Dorsolateral prefrontal cortex (tissue), 120 donors: ENCODE measurements at regions of chr14 and their contacts with region 1.

Region 1: GRCh38 chr14:73458151-73458976 is at the start of gene NUMB:
- DNase-seq: peak; percentile 83 to 99 (median 98)
- H3K4me3 ChIP-seq: peak within 1 kb of the TSS; percentile 59 to 98 (median 91)
- H3K27ac ChIP-seq: peak within 1 kb of the TSS in 58 of 59 donors; percentile 29 to 96 (median 83)
- H3K27me3 ChIP-seq: no peaks in the 10 kb centered on the region
- CTCF ChIP-seq: peak in 32 of 56 donors; percentile 6 to 57 (median 36)
- total RNA-seq, gene NUMB: 49.2 to 92.1 (median 68.4) TPM

Region 2: GRCh38 chr14:73491256-73492042 is 33.1 kb after region 1 on chr14:
- intact Hi-C with region 1: loop called in 1 of 2 experiments (anchors 2 kb)
- DNase-seq: peak in 9 of 10 donors; percentile 33 to 72 (median 61)
- H3K4me3 ChIP-seq: peak overlapping the region; percentile 62 to 90 (median 80)
- H3K27ac ChIP-seq: peak overlapping the region in 57 of 59 donors; percentile 19 to 93 (median 84)
- H3K27me3 ChIP-seq: no peaks in the 10 kb centered on the region
- CTCF ChIP-seq: no peak